ENCODE measurements at regions of chr11 and their contacts with region 1.

Region 1: DNA sequence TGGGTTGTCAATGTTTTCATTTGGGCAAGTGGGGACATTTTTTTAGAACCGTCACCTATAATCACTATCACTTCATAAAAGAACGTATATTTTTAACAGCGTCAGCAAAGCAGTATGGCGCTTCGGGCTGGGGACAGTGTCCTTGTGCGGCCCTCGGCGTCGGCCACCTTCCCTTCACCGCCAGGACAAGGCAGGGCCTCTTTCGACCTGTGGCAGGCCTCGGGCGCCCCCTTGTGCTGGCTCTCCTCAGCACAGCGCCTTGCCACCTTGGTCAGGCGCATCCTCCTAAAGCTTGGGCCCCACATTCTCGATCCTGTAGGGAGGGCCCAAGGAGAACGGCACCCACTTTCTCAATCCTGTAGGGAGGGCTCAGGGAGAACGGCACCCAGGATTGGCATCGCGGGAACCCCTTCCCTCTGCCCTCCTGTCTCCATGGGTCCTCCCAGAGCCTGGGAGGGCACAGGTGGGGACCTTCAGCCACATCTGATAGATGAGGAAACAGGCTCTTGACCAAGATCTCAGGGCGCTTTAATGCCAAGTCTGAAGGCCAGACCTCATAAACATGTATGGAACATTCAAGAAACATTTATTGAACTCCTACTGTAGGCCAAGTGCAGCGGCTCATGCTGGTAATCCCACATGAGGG is 11.5 kb upstream of the FADD start:
- DNase-seq: no peak
- H3K4me3 ChIP-seq: no peak overlapping the region
- H3K27ac ChIP-seq: no peak overlapping the region
- H3K4me1 ChIP-seq: peaks cover 0 to 8% (median 3%) of the 10 kb centered on the region in 4 donors
- H3K27me3 ChIP-seq: peaks cover 0 to 32% (median 3%) of the 10 kb centered on the region in 4 donors
- CTCF ChIP-seq: peak; percentile 71 to 80 (median 71)
- EP300 ChIP-seq: no peak
- POLR2A ChIP-seq: no peak

Region 2: DNA sequence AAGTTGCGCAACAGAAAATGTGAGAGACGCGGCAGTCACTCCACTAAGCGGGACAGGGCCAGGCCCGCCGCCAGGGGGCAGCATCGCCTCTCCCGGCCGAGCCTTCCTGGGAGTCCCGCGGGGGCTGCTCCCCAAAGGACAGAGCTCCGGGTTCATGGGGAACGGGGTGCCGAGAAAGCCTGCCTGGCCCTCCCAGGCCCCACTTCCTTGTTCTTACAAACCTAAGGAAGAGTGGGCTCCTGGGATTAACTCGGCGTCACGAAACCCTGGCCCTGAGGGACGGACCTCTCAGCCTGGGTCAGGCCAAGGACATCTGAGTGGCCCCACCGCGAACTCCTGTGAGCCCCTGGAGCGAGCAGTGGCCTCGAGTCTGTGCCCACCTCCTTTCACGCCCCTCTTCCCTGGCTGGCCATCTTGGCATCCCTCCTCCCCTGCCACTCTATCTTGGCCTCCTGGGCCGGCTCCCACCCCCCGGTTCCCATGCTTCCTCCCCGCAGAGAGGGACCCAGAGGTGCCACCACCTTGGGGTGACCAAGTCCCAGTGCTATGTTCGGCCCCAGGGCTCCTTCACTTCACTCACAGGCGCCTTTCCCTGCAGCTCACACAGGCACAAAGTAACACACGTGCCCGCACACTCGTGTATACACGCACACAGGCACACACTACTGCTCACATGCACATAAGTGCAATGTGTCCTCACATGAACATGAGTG is 272.5 kb before region 1 on chr11:
- intact Hi-C with region 1: loop called (anchors 2 kb)
- DNase-seq: no peak
- H3K4me3 ChIP-seq: no peak overlapping the region
- H3K27ac ChIP-seq: peak overlapping the region; percentile 49 to 63 (median 58)
- H3K4me1 ChIP-seq: peaks cover 27 to 33% (median 30%) of the 10 kb centered on the region in 4 donors
- H3K27me3 ChIP-seq: peaks cover 0 to 82% (median 0%) of the 10 kb centered on the region in 4 donors
- CTCF ChIP-seq: peak; percentile 82 to 88 (median 88)
- EP300 ChIP-seq: no peak
- POLR2A ChIP-seq: no peak

Region 3: DNA sequence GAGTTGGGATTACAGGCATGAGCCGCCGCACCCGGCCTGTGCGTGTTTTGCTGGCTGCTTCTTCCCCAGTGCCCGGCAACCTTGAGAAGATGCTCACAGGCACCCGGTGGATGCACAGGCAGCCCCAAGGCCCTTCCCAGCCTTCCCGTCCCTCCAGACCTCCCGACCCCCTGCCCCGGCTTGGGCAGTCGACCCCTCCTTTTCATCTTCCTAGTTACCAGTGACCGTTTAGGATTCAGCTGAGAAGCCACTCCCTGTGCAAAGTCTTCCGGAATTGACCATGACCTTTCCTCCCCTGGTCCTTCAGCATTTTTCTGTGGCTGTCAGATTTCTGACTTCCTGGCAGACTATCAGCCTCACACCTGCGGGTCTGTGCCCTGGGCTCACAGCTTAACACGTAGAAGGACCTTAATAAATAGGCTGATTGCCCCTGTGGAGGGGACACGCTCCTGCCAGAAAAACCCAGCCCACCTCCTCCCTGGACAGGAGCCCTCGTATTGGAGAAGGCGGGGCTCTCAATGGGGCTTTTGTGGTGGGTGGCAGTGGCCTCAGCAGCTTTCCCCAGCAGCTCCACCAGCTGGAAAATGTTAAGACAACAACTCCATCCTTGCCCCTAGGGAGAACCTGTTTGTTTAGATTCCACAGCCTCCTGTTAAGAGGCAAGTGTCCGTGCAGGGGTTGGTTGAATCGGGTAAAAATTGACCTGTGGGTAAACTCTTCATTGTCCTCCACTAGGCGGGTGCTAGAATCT is 123.9 kb before region 1 on chr11:
- intact Hi-C with region 1: no loop called
- DNase-seq: peak; percentile 74
- H3K4me3 ChIP-seq: no peak overlapping the region
- H3K27ac ChIP-seq: no peak overlapping the region
- H3K4me1 ChIP-seq: peaks cover 0 to 3% (median 0%) of the 10 kb centered on the region in 4 donors
- H3K27me3 ChIP-seq: peaks cover 0 to 77% (median 2%) of the 10 kb centered on the region in 4 donors
- CTCF ChIP-seq: no peak
- EP300 ChIP-seq: no peak
- POLR2A ChIP-seq: no peak

Region 4: DNA sequence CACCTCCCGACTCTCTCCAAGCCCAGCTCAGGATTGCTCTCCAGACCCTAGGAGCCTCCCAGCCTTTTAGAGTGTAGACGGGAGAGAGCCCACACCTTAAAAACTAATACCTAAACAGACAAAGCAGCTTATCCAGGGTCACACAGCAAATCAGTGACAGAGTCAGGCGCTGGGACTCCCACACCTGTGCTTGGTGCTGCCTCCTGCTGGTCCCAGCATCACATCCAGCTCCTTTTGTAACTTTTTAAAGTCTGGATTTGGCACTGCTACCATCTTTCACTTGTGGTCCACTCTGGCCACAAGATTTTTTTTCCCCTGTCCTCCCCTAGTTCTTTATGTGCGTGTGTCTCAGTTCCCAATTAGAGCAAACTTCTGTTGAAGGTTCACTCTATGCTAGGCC is 108.8 kb before region 1 on chr11:
- intact Hi-C with region 1: no loop called
- DNase-seq: no peak
- H3K4me3 ChIP-seq: no peak overlapping the region
- H3K27ac ChIP-seq: no peak overlapping the region
- H3K4me1 ChIP-seq: peaks cover 0 to 13% (median 7%) of the 10 kb centered on the region in 4 donors
- H3K27me3 ChIP-seq: peaks cover 0 to 61% (median 4%) of the 10 kb centered on the region in 4 donors
- CTCF ChIP-seq: no peak
- EP300 ChIP-seq: no peak
- POLR2A ChIP-seq: no peak